H1 (cell line): ENCODE measurements at regions of chr19 and their contacts with region 1.

Region 1: GRCh38 chr19:14366498-14366915 is 14.7 kb upstream of the ADGRE5 start:
- DNase-seq: peak; percentile 46 to 93
- H3K4me3 ChIP-seq: no peak overlapping the region
- H3K27ac ChIP-seq: no peak overlapping the region
- H3K4me1 ChIP-seq: peaks cover 0 to 8% (median 2%) of the 10 kb centered on the region in 4 experiments; a peak in 3 of 7 replicates
- H3K27me3 ChIP-seq: no peaks in the 10 kb centered on the region
- CTCF ChIP-seq: no peak
- EP300 ChIP-seq: no peak
- POLR2A ChIP-seq: no peak
- RAD21 ChIP-seq: no peak

Region 2: GRCh38 chr19:14383661-14384555 is 17.4 kb after region 1 on chr19:
- CTCF ChIA-PET with region 1: interaction called, 25 read pairs
- POLR2A ChIA-PET with region 1: interaction called, 14 read pairs
- DNase-seq: no peak
- H3K4me3 ChIP-seq: no peak overlapping the region
- H3K27ac ChIP-seq: no peak overlapping the region
- H3K4me1 ChIP-seq: peaks cover 2 to 19% (median 6%) of the 10 kb centered on the region in 4 experiments
- H3K27me3 ChIP-seq: no peaks in the 10 kb centered on the region
- CTCF ChIP-seq: no peak
- EP300 ChIP-seq: no peak
- POLR2A ChIP-seq: no peak
- RAD21 ChIP-seq: no peak